GM12878 (cell line): ENCODE measurements at regions of chr5 and their contacts with region 1.

Region 1: DNA sequence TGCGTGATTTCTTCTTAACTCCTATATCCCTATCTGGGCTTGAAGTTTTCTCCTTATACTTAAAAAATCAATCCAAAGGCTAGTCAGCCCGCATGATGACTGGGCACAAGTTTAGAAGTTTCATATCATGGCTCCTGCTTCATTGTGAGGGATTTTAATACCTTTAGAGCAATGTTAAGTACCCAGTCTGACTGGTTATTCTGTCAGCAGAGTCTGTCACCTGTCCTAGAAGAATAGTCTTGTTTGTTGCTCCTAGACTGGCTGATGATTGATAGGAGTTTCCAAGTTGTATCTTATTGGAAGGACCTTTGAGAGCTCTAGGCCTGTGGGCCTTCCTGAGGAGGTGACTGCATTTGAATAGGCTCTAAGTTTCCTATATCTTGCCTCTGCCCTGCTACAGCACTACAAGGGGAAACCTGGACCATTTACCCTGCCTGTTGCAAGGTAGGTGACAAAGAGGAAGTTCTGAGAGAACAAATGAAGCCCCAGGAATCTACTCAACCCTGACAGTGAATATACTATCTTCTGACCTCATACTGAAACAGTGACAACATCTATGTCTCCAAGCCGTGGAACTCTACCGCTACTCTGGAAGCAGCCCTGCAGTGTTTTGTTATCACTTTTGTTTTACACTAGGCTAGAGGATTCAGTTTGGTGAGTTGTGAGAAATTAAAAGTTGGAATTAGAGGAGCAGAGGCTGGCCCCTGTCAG is 66.5 kb downstream of the F2RL2 start:
- DNase-seq: peak; percentile 65
- ATAC-seq: peak; percentile 98
- H3K4me3 ChIP-seq: no peak overlapping the region
- H3K27ac ChIP-seq: peak overlapping the region; percentile 38
- H3K4me1 ChIP-seq: peaks cover 19% of the 10 kb centered on the region
- H3K27me3 ChIP-seq: no peaks in the 10 kb centered on the region
- CTCF ChIP-seq: no peak
- EP300 ChIP-seq: no peak
- POLR2A ChIP-seq: no peak
- RAD21 ChIP-seq: peak; percentile 29; the same call in 1 of the 2 replicates

Region 2: DNA sequence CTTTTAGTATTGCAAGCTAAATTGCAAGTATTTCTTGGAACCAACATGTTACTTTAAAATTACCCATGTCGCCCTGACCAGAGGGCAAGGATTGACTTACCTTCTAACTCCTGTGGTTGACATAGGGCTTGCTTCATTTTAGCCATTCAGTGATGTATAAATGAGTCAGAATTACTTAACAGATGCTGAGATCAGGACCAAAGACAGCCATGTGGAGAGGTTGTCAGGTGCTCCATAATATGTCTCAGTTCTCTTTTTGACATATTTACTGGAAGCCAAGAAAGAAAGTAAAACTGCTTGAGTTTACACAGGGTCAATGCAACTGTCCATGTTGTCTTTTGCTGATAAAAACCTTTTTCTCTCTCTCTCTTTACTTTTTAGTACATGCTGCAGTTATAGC is 33.4 kb after region 1 on chr5:
- CTCF ChIA-PET with region 1: no interaction called
- POLR2A ChIA-PET with region 1: interaction called, 11 read pairs
- RAD21 ChIA-PET with region 1: no interaction called
- SMC1A ChIA-PET with region 1: interaction called, 3 read pairs
- in situ Hi-C with region 1: no loop called
- intact Hi-C with region 1: no loop called
- DNase-seq: peak; percentile 53
- ATAC-seq: peak; percentile 99
- H3K4me3 ChIP-seq: no peak overlapping the region
- H3K27ac ChIP-seq: peak overlapping the region; percentile 38; the same call in 1 of the 2 replicates
- H3K4me1 ChIP-seq: peaks cover 8% of the 10 kb centered on the region; the same call in 1 of the 2 replicates
- H3K27me3 ChIP-seq: no peaks in the 10 kb centered on the region
- CTCF ChIP-seq: no peak
- EP300 ChIP-seq: peak; percentile 67 to 72; a peak in 2 of 4 replicates
- POLR2A ChIP-seq: no peak
- RAD21 ChIP-seq: no peak

Region 3: GRCh38 chr5:76818844-76819831 is 262.5 kb after region 1 on chr5 and contains the start of gene F2RL1:
- CTCF ChIA-PET with region 1: no interaction called
- POLR2A ChIA-PET with region 1: no interaction called
- RAD21 ChIA-PET with region 1: no interaction called
- SMC1A ChIA-PET with region 1: no interaction called
- in situ Hi-C with region 1: no loop called
- intact Hi-C with region 1: no loop called
- DNase-seq: no peak
- ATAC-seq: peak; percentile 54
- H3K4me3 ChIP-seq: peak within 1 kb of the TSS; percentile 47; the same call in 1 of the 2 replicates
- H3K27ac ChIP-seq: no peak within 1 kb of the TSS
- H3K4me1 ChIP-seq: no peaks in the 10 kb centered on the region
- H3K27me3 ChIP-seq: peaks cover 16 to 21% of the 10 kb centered on the region in 2 experiments
- CTCF ChIP-seq: no peak
- EP300 ChIP-seq: no peak
- POLR2A ChIP-seq: no peak
- RAD21 ChIP-seq: no peak
- polyA plus RNA-seq, gene F2RL1: not detected